ENCODE measurements at regions of chr9 and their contacts with region 1.

Region 1: GRCh38 chr9:14159440-14160216 is 154.3 kb downstream of the NFIB start:
- DNase-seq: no peak
- ATAC-seq: no peak
- H3K4me3 ChIP-seq: no peak overlapping the region
- H3K4me3 Mint-ChIP-seq: no peak overlapping the region
- H3K27ac ChIP-seq: no peak overlapping the region
- H3K27ac Mint-ChIP-seq: no peak overlapping the region
- H3K4me1 ChIP-seq: no peaks in the 10 kb centered on the region
- H3K4me1 Mint-ChIP-seq: peaks cover 3% of the 10 kb centered on the region
- H3K27me3 ChIP-seq: no peaks in the 10 kb centered on the region
- H3K27me3 Mint-ChIP-seq: peaks cover 2% of the 10 kb centered on the region
- CTCF ChIP-seq: no peak

Region 2: GRCh38 chr9:14221558-14221957 is 61.9 kb after region 1 on chr9:
- CTCF ChIA-PET with region 1: no interaction called
- POLR2A ChIA-PET with region 1: no interaction called
- intact Hi-C with region 1: no loop called
- DNase-seq: no peak
- ATAC-seq: no peak
- H3K4me3 ChIP-seq: no peak overlapping the region
- H3K4me3 Mint-ChIP-seq: no peak overlapping the region
- H3K27ac ChIP-seq: no peak overlapping the region
- H3K27ac Mint-ChIP-seq: no peak overlapping the region
- H3K4me1 ChIP-seq: no peaks in the 10 kb centered on the region
- H3K4me1 Mint-ChIP-seq: no peaks in the 10 kb centered on the region
- H3K27me3 ChIP-seq: peaks cover 0 to 2% of the 10 kb centered on the region in 2 experiments
- H3K27me3 Mint-ChIP-seq: no peaks in the 10 kb centered on the region
- CTCF ChIP-seq: no peak

Region 3: GRCh38 chr9:14283276-14283675 is 123.6 kb after region 1 on chr9:
- CTCF ChIA-PET with region 1: no interaction called
- POLR2A ChIA-PET with region 1: no interaction called
- intact Hi-C with region 1: no loop called
- DNase-seq: no peak
- ATAC-seq: no peak
- H3K4me3 ChIP-seq: no peak overlapping the region
- H3K4me3 Mint-ChIP-seq: no peak overlapping the region
- H3K27ac ChIP-seq: no peak overlapping the region
- H3K27ac Mint-ChIP-seq: no peak overlapping the region
- H3K4me1 ChIP-seq: no peaks in the 10 kb centered on the region
- H3K4me1 Mint-ChIP-seq: no peaks in the 10 kb centered on the region
- H3K27me3 ChIP-seq: no peaks in the 10 kb centered on the region
- H3K27me3 Mint-ChIP-seq: peaks cover 12% of the 10 kb centered on the region
- CTCF ChIP-seq: no peak

Region 4: GRCh38 chr9:14383294-14383693 is 223.7 kb after region 1 on chr9:
- CTCF ChIA-PET with region 1: no interaction called
- POLR2A ChIA-PET with region 1: no interaction called
- intact Hi-C with region 1: no loop called
- DNase-seq: no peak
- ATAC-seq: no peak
- H3K4me3 ChIP-seq: no peak overlapping the region
- H3K4me3 Mint-ChIP-seq: no peak overlapping the region
- H3K27ac ChIP-seq: no peak overlapping the region
- H3K27ac Mint-ChIP-seq: no peak overlapping the region
- H3K4me1 ChIP-seq: no peaks in the 10 kb centered on the region
- H3K4me1 Mint-ChIP-seq: no peaks in the 10 kb centered on the region
- H3K27me3 ChIP-seq: no peaks in the 10 kb centered on the region
- H3K27me3 Mint-ChIP-seq: peaks cover 2% of the 10 kb centered on the region
- CTCF ChIP-seq: no peak

Region 5: GRCh38 chr9:16028548-16028947 is 1868.9 kb after region 1 on chr9:
- CTCF ChIA-PET with region 1: no interaction called
- POLR2A ChIA-PET with region 1: no interaction called
- intact Hi-C with region 1: loop called in 1 of 2 experiments (anchors 5 kb)
- DNase-seq: no peak
- ATAC-seq: no peak
- H3K4me3 ChIP-seq: no peak overlapping the region
- H3K4me3 Mint-ChIP-seq: no peak overlapping the region
- H3K27ac ChIP-seq: no peak overlapping the region
- H3K27ac Mint-ChIP-seq: no peak overlapping the region
- H3K4me1 ChIP-seq: no peaks in the 10 kb centered on the region
- H3K4me1 Mint-ChIP-seq: no peaks in the 10 kb centered on the region
- H3K27me3 ChIP-seq: no peaks in the 10 kb centered on the region
- H3K27me3 Mint-ChIP-seq: no peaks in the 10 kb centered on the region
- CTCF ChIP-seq: no peak